Activated naive CD4-positive, alpha-beta T cell treated with anti-CD3 and anti-CD28 coated beads for 36 hours (primary cell): ENCODE measurements at regions of chr11 and their contacts with region 1.

Region 1: GRCh38 chr11:124070915-124071635 is 29.9 kb upstream of the OR10G7 start:
- DNase-seq: peak; percentile 81
- H3K4me3 Mint-ChIP-seq: no peak overlapping the region
- H3K27ac Mint-ChIP-seq: no peak overlapping the region
- H3K4me1 Mint-ChIP-seq: peaks cover 12% of the 10 kb centered on the region
- H3K27me3 Mint-ChIP-seq: peaks cover 39% of the 10 kb centered on the region

Region 2: DNA sequence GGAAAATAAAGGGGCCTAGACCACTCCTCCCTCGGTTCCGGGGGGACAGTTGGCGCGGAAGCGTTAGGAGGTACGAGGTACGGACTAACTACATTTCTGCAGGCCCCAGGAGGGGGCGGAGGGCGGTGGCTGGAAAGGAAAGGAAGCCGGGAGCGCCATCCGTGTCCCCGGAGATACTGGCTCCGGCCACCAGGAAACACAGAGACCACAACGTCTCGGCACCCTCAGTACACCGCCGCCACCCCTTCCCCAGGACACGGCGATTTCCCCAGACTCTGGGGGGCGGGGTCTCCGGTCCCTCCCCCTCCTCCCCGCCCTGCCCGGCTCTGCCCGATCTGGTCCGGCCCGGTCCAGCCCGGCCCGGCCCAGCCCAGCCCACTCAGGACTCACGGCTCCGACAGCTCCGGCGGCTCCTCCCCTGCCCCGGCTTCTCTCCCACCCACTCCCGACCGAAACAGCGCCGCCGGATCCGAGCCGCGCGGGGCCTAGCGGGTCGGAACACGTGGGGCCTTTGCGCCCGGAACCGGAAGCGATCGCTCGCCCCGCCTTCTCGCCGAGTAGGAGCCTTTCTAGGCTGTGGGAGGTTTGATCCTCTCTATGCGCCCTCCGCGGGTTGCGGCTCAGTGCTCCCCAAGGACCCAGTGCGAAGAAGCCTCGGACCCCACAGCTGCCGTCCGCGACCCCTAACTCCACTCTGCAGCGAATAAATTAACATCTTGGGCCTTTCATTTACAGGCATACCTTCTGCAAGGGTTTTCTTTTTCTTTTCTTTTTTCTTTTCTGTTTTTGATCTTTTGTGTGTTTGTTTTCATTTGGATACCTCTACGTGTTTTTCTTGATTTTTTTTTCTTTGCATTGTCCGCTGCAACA is 329.7 kb before region 1 on chr11 and contains the start of gene ZNF202:
- CTCF ChIA-PET with region 1: no interaction called
- intact Hi-C with region 1: loop called (anchors 10 kb)
- DNase-seq: peak; percentile 94
- H3K4me3 Mint-ChIP-seq: peak within 1 kb of the TSS; percentile 98
- H3K27ac Mint-ChIP-seq: peak within 1 kb of the TSS; percentile 92
- H3K4me1 Mint-ChIP-seq: peaks cover 40% of the 10 kb centered on the region
- H3K27me3 Mint-ChIP-seq: no peaks in the 10 kb centered on the region
- total RNA-seq, gene ZNF202: 5.9 to 6.4 TPM

Region 3: GRCh38 chr11:123956752-123957151 is 114.3 kb before region 1 on chr11:
- CTCF ChIA-PET with region 1: no interaction called
- intact Hi-C with region 1: no loop called
- DNase-seq: no peak
- H3K4me3 Mint-ChIP-seq: no peak overlapping the region
- H3K27ac Mint-ChIP-seq: no peak overlapping the region
- H3K4me1 Mint-ChIP-seq: no peaks in the 10 kb centered on the region
- H3K27me3 Mint-ChIP-seq: peaks cover 7% of the 10 kb centered on the region

Region 4: GRCh38 chr11:124114942-124115781 is 44.1 kb after region 1 on chr11 and contains the start of gene VWA5A:
- CTCF ChIA-PET with region 1: interaction called, 5 read pairs
- intact Hi-C with region 1: loop called (anchors 1 kb)
- DNase-seq: peak; percentile 93
- H3K4me3 Mint-ChIP-seq: peak within 1 kb of the TSS; percentile 82
- H3K27ac Mint-ChIP-seq: peak within 1 kb of the TSS; percentile 56
- H3K4me1 Mint-ChIP-seq: peaks cover 9% of the 10 kb centered on the region
- H3K27me3 Mint-ChIP-seq: no peaks in the 10 kb centered on the region
- total RNA-seq, gene VWA5A: 9.7 to 11.4 TPM

Region 5: GRCh38 chr11:124194698-124195410 is 123.8 kb after region 1 on chr11:
- CTCF ChIA-PET with region 1: interaction called, 37 read pairs
- intact Hi-C with region 1: loop called (anchors 1 kb)
- DNase-seq: peak; percentile 71
- H3K4me3 Mint-ChIP-seq: no peak overlapping the region
- H3K27ac Mint-ChIP-seq: no peak overlapping the region
- H3K4me1 Mint-ChIP-seq: no peaks in the 10 kb centered on the region
- H3K27me3 Mint-ChIP-seq: peaks cover 17% of the 10 kb centered on the region

Region 6: GRCh38 chr11:124402326-124402922 is 331.3 kb after region 1 on chr11:
- CTCF ChIA-PET with region 1: no interaction called
- intact Hi-C with region 1: loop called (anchors 5 kb)
- DNase-seq: peak; percentile 82
- H3K4me3 Mint-ChIP-seq: no peak overlapping the region
- H3K27ac Mint-ChIP-seq: no peak overlapping the region
- H3K4me1 Mint-ChIP-seq: no peaks in the 10 kb centered on the region
- H3K27me3 Mint-ChIP-seq: peaks cover 6% of the 10 kb centered on the region

Region 7: DNA sequence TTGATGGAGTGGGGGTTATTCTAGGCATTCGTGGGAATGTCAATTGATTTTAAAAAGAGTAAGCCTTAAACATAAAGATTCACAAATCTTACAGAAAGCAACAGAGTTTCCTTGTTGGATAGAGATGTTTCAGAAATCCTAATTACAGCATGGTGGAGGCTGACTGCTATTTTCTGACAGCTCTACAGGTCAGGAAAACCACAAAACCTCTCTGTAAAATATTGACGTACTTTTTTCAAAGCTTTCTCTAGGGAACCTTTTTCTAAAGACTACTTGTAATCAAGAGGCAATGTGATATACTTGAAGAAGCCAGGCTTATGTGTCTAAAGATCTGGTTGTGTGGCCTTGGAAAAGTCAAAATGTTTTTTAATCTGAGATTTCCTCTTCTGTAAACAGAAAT is 383.5 kb after region 1 on chr11:
- CTCF ChIA-PET with region 1: no interaction called
- intact Hi-C with region 1: no loop called
- DNase-seq: no peak
- H3K4me3 Mint-ChIP-seq: no peak overlapping the region
- H3K27ac Mint-ChIP-seq: no peak overlapping the region
- H3K4me1 Mint-ChIP-seq: no peaks in the 10 kb centered on the region
- H3K27me3 Mint-ChIP-seq: peaks cover 6% of the 10 kb centered on the region

Region 8: GRCh38 chr11:124591430-124591829 is 520.4 kb after region 1 on chr11:
- CTCF ChIA-PET with region 1: no interaction called
- intact Hi-C with region 1: loop called (anchors 2 kb)
- DNase-seq: no peak
- H3K4me3 Mint-ChIP-seq: no peak overlapping the region
- H3K27ac Mint-ChIP-seq: no peak overlapping the region
- H3K4me1 Mint-ChIP-seq: no peaks in the 10 kb centered on the region
- H3K27me3 Mint-ChIP-seq: peaks cover 15% of the 10 kb centered on the region